ENCODE measurements at regions of chr7 and their contacts with region 1.

Region 1: DNA sequence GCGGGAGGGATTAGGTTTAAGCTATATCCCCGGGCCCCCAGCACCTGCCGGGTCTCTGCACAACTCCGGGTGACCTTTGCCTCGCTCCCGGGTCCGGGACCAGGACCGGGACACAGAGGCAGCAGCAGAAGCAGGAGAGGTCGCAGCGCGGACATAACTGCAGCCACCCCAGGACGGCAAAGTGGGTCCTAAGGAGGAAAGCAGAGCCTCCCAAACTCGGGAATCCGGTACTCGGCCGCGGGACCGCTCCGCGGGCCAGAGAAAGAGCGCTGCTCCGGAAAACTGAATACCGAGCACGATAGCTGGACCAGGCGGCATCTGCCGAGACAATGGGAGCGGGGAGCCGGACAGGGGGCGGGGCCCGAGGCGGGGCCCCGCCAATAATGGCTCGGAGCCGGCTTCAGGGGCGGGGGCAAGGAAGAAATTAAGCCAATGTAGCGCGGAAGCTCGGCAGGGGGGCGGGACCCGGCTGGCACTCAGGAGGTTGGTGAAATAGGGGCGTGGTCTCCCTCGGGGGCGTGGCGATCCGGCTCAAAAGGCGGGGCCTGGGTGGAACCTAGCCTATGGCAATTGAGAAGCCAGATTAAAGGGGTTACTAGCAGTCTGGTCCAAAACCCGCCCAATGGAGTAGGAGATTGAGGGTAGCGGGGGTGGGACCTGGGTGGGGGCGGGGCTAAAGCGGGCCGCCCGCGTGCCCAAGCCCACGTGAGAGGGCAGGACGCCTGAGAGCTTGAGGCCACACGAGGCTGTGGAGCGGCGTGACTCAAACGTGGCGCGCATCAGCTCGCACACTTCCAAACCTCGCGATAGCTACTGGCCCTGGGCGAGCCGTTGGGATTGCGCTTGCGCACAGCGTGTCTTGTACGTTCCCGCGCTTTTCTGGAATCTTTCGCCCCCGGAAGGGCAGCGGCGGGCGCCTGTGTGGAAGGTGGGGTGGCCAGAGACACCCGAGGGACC is at the starts of genes GPC2 and STAG3:
- DNase-seq: peak; percentile 99
- ATAC-seq: peak; percentile 86
- H3K4me3 Mint-ChIP-seq: peak within 1 kb of the TSS; percentile 80
- H3K27ac Mint-ChIP-seq: peak within 1 kb of the TSS; percentile 64
- H3K4me1 Mint-ChIP-seq: peaks cover 48% of the 10 kb centered on the region
- H3K27me3 Mint-ChIP-seq: peaks cover 3% of the 10 kb centered on the region
- total RNA-seq, gene GPC2: 12.6 to 13.0 TPM
- total RNA-seq, gene STAG3: 31.1 to 38.8 TPM

Region 2: GRCh38 chr7:100158229-100159098 is 18.9 kb before region 1 on chr7 and contains the start of gene TRAPPC14:
- POLR2A ChIA-PET with region 1: interaction called, 16 read pairs
- DNase-seq: peak; percentile 93
- ATAC-seq: peak; percentile 80
- H3K4me3 Mint-ChIP-seq: peak within 1 kb of the TSS; percentile 83
- H3K27ac Mint-ChIP-seq: peak within 1 kb of the TSS; percentile 86
- H3K4me1 Mint-ChIP-seq: peaks cover 40% of the 10 kb centered on the region
- H3K27me3 Mint-ChIP-seq: no peaks in the 10 kb centered on the region
- total RNA-seq, gene TRAPPC14: 52.0 to 58.4 TPM